Activated T-helper 1 cell treated with anti-CD3 and anti-CD28 coated beads, Interleukin-12 subunit alpha, Interleukin-12 subunit beta, Interleukin-2, Interleukin-4 antibody, amounts not matched to agents 30 ng/mL and 10 ng/mL and 1 ng/mL, durations not matched to agents 14 hours and 24 hours and 36 hours (primary cell): ENCODE measurements at regions of chr6 and their contacts with region 1.

Region 1: GRCh38 chr6:170306324-170307079 is at the start of gene FAM120B:
- DNase-seq: peak; percentile 97
- H3K4me3 Mint-ChIP-seq: peak within 1 kb of the TSS; percentile 95
- H3K27ac Mint-ChIP-seq: peak within 1 kb of the TSS; percentile 92
- H3K4me1 Mint-ChIP-seq: peaks cover 26% of the 10 kb centered on the region
- H3K27me3 Mint-ChIP-seq: peaks cover 32% of the 10 kb centered on the region
- total RNA-seq, gene FAM120B: 18.4 TPM in 2 replicates

Region 2: DNA sequence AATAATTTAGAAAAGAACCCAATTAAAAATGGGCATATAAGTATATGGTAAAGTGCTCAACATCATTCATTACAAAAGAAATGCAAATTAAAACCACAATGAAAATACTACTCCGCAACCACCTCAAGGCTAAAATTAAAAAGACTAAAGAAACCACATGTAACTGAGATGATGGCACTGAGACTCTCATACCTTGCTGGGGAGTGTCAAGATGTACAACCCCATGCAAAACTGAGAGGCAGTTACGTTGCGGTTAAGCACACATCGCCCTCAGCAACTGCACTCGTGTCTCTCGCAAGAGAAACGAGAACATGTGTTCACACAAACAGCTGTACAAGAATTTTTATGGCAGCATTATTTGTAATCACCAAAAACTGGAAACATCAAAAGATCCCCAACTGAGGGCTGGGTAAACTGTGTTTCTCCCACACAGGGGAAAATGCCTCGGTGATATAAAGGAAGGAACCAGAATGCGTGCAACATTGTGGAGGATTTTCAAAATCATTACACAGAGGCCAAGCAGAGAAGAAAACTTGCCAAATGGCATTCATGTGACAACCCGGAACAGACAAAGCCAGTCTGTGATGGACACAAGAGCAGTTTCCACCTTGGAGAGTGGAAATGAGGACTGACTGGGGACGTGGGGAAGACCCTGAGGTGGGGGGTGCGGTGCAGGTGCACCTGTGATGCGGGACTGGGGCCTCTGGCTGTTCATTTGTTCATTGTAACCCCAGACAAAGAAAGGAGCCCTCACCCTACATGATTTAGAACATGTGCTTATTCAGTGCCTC is 749.5 kb before region 1 on chr6:
- intact Hi-C with region 1: loop called (anchors 10 kb)
- DNase-seq: peak; percentile 13
- H3K4me3 Mint-ChIP-seq: peak overlapping the region; percentile 4
- H3K27ac Mint-ChIP-seq: peak overlapping the region; percentile 34
- H3K4me1 Mint-ChIP-seq: peaks cover 15% of the 10 kb centered on the region
- H3K27me3 Mint-ChIP-seq: peaks cover 20% of the 10 kb centered on the region

Region 3: DNA sequence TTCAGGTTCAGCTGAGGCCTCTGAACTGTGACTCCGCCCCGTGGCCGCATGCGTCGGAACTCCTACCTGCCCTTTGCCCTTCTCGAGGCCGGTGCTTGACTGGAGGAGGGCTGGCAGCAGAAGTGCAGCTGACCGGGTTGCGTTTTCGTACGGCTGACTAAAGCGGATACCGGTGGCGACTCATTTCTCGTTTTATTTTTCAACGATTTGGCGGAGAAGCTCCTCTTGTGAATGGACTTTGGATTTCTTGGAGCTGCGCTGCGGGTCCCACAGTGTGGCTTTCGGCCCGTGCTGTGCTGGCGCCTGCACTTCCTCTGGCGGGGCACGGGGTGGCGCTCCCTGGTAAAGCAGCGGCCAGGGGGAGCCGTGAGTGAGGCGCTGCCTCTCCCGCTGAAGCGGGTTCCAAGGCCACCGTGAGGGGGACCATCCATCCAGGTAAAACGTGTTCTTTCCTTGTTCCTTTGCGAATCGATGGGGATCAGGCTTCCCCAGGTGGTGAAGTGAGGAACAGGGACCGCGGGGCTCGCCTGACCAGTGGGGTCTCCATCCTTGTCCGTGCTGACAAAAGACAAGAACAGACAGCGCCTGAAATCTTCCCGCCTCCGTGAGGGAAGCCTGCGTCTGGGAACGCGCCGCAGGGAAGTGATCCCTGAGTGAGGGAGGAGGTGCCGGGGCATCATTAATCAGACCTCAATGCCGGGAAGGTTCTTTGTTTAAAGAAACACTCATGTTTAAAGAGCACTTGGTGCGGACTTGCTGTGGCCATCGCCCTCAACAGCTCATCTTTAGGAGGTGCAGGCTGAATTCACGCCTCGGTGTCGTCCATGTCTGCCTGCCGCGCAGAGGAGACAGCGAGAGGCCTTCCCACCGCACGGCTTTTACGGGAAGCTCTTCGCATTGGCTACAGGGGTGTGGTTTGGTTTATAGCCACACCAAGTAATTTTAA is 516.2 kb before region 1 on chr6:
- intact Hi-C with region 1: loop called (anchors 5 kb)
- DNase-seq: peak; percentile 62
- H3K4me3 Mint-ChIP-seq: peak overlapping the region; percentile 84
- H3K27ac Mint-ChIP-seq: peak overlapping the region; percentile 34
- H3K4me1 Mint-ChIP-seq: peaks cover 22% of the 10 kb centered on the region
- H3K27me3 Mint-ChIP-seq: peaks cover 24% of the 10 kb centered on the region

Region 4: DNA sequence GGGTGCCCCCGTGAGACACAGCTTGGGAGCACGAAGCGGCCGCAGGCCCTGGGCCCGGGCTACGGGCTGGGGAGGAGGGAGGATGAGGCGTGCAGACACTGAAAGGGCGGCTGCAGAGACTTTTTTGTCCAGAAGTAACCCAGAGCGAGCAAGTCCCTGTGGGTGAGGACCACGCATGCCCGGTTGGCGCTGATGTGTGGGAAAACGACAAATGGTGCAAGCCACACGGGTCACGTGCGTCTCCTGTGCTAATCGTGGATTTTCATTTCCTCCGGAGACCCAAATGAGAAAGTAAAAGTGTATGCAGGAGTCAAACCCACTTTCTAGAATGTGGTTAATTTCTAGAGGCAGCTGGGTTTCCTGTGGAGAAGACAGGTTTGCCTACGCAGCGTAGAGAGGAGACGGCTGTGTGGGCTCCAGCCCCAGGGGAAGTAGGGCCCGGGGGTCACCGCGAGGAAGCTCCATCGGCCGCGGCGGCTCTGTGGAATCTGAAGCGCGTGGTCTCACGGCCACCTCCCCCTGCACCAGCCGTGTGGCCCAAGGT is 34.7 kb before region 1 on chr6:
- intact Hi-C with region 1: loop called (anchors 2 kb)
- DNase-seq: peak; percentile 51
- H3K4me3 Mint-ChIP-seq: peak overlapping the region; percentile 37
- H3K27ac Mint-ChIP-seq: no peak overlapping the region
- H3K4me1 Mint-ChIP-seq: peaks cover 9% of the 10 kb centered on the region
- H3K27me3 Mint-ChIP-seq: peaks cover 50% of the 10 kb centered on the region

Region 5: DNA sequence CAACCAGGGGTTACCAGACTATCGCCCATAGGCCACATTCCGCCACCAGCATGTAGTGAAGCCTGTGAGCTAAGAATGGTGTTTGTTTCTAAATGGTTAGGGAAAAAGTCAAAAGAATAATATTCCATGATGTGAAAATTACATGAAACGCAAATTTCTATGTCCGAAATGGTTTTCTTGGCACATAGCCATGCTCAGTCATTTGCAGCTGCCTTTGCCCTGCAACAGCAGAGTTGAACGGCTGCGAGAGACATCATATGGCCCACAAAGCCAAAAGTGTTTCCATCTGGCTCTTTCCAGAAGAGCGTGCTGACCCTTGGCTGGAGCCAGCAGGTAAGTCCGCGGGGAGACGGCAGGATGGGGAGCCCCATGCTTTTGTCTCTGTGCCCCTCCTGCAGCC is 60.7 kb after region 1 on chr6:
- intact Hi-C with region 1: no loop called
- DNase-seq: no peak
- H3K4me3 Mint-ChIP-seq: no peak overlapping the region
- H3K27ac Mint-ChIP-seq: no peak overlapping the region
- H3K4me1 Mint-ChIP-seq: peaks cover 8% of the 10 kb centered on the region
- H3K27me3 Mint-ChIP-seq: no peaks in the 10 kb centered on the region

Region 6: GRCh38 chr6:170393807-170394399 is 87.4 kb after region 1 on chr6:
- intact Hi-C with region 1: loop called (anchors 5 kb)
- DNase-seq: no peak
- H3K4me3 Mint-ChIP-seq: no peak overlapping the region
- H3K27ac Mint-ChIP-seq: peak overlapping the region; percentile 29
- H3K4me1 Mint-ChIP-seq: peaks cover 6% of the 10 kb centered on the region
- H3K27me3 Mint-ChIP-seq: no peaks in the 10 kb centered on the region

Region 7: GRCh38 chr6:170584181-170584953 is 277.9 kb after region 1 on chr6 and contains the start of gene PDCD2:
- intact Hi-C with region 1: loop called (anchors 2 kb)
- DNase-seq: peak; percentile 91
- H3K4me3 Mint-ChIP-seq: peak within 1 kb of the TSS; percentile 99
- H3K27ac Mint-ChIP-seq: peak within 1 kb of the TSS; percentile 93
- H3K4me1 Mint-ChIP-seq: peaks cover 36% of the 10 kb centered on the region
- H3K27me3 Mint-ChIP-seq: no peaks in the 10 kb centered on the region
- total RNA-seq, gene PDCD2: 142 and 144 TPM in 2 replicates